A673 (cell line): ENCODE measurements at regions of chr11 and their contacts with region 1.

Region 1: DNA sequence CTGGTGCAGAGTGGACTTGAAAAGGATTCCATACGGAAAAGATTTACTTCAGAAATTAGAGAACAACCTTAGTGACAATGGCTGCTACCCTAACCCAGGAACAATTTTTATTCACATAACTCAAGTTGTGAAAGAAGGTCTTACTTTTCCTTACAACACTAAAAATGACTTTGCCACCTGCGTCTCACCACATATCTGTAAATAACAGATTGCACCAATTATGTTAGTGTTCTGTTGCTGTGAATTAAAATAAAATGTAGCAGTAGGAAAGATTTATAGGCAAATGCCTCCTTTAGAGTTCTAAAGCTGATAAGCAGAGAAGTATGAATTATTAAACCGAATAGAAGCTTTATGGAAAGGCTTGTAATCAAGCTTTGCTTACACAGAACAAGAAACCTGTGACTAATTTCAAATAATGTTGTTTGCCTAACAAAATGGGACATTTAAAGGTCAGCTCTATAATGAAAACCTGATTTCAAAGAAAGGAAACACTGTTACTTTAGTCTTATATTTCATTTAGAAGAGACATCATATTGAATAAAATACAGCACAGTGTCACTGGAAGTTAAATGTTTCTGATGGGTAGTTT is 2237.8 kb downstream of the LRRC4C start:
- DNase-seq: peak; percentile 79
- H3K4me3 ChIP-seq: no peak overlapping the region
- H3K27ac ChIP-seq: peak overlapping the region; percentile 98
- H3K4me1 ChIP-seq: peaks cover 40% of the 10 kb centered on the region
- H3K27me3 ChIP-seq: no peaks in the 10 kb centered on the region
- CTCF ChIP-seq: no peak

Region 2: GRCh38 chr11:37449146-37449545 is 1772.5 kb before region 1 on chr11:
- CTCF ChIA-PET with region 1: no interaction called
- POLR2A ChIA-PET with region 1: no interaction called
- intact Hi-C with region 1: loop called (anchors 10 kb)
- DNase-seq: peak; percentile 94
- H3K4me3 ChIP-seq: no peak overlapping the region
- H3K27ac ChIP-seq: no peak overlapping the region
- H3K4me1 ChIP-seq: peaks cover 50% of the 10 kb centered on the region
- H3K27me3 ChIP-seq: no peaks in the 10 kb centered on the region
- CTCF ChIP-seq: peak; percentile 92

Region 3: DNA sequence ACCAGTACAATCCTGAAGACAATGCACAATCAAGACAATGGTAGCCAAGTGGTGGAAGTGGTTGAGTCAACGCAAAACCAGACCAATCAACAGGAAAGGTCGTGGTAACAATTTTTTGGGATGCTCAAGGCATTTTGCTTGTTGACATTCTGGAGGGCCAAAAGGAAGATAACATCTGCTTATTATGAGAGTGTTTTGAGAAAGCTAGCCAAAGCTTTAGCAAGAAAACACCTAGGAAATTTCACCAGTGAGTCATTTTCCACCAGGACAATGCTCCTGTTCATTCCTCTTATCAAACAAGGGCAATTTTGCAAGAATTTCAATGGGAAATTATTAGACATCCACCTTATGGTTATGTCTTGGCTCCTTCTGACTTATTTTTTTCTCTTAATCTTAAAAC is 691.4 kb before region 1 on chr11:
- CTCF ChIA-PET with region 1: no interaction called
- POLR2A ChIA-PET with region 1: no interaction called
- intact Hi-C with region 1: no loop called
- DNase-seq: no peak
- H3K4me3 ChIP-seq: no peak overlapping the region
- H3K27ac ChIP-seq: no peak overlapping the region
- H3K4me1 ChIP-seq: no peaks in the 10 kb centered on the region
- H3K27me3 ChIP-seq: no peaks in the 10 kb centered on the region
- CTCF ChIP-seq: no peak

Region 4: DNA sequence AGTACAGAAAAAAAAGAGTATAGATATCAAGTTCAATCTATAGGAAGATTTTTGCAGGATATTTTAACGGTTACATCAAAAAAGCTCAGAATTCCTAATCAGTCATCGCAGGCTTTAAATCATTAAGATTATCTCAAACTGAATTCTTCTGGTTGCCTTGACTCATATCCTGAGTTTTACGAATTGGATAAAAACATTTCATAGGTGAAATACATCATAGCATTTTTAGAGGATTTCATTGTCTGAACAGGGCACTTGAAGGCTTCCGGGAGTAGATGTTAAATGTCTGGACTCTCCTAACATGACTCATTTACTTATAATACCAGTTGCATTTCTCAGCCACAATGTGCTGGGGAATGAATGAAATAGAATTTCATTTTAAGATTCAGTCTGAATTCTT is 407.0 kb before region 1 on chr11:
- CTCF ChIA-PET with region 1: no interaction called
- POLR2A ChIA-PET with region 1: no interaction called
- intact Hi-C with region 1: loop called (anchors 5 kb)
- DNase-seq: peak; percentile 86
- H3K4me3 ChIP-seq: no peak overlapping the region
- H3K27ac ChIP-seq: no peak overlapping the region
- H3K4me1 ChIP-seq: no peaks in the 10 kb centered on the region
- H3K27me3 ChIP-seq: no peaks in the 10 kb centered on the region
- CTCF ChIP-seq: no peak

Region 5: GRCh38 chr11:39365809-39366436 is 144.3 kb after region 1 on chr11:
- CTCF ChIA-PET with region 1: interaction called, 8 read pairs
- POLR2A ChIA-PET with region 1: no interaction called
- intact Hi-C with region 1: loop called (anchors 1 kb)
- DNase-seq: peak; percentile 96
- H3K4me3 ChIP-seq: no peak overlapping the region
- H3K27ac ChIP-seq: peak overlapping the region; percentile 56
- H3K4me1 ChIP-seq: peaks cover 32% of the 10 kb centered on the region
- H3K27me3 ChIP-seq: no peaks in the 10 kb centered on the region
- CTCF ChIP-seq: peak; percentile 99

Region 6: GRCh38 chr11:39975091-39975490 is 753.4 kb after region 1 on chr11:
- CTCF ChIA-PET with region 1: no interaction called
- POLR2A ChIA-PET with region 1: no interaction called
- intact Hi-C with region 1: loop called (anchors 10 kb)
- DNase-seq: peak; percentile 92
- H3K4me3 ChIP-seq: no peak overlapping the region
- H3K27ac ChIP-seq: no peak overlapping the region
- H3K4me1 ChIP-seq: peaks cover 25% of the 10 kb centered on the region
- H3K27me3 ChIP-seq: peaks cover 7% of the 10 kb centered on the region
- CTCF ChIP-seq: no peak